B cell (primary cell): ENCODE measurements at regions of chr16 and their contacts with region 1.

Region 1: DNA sequence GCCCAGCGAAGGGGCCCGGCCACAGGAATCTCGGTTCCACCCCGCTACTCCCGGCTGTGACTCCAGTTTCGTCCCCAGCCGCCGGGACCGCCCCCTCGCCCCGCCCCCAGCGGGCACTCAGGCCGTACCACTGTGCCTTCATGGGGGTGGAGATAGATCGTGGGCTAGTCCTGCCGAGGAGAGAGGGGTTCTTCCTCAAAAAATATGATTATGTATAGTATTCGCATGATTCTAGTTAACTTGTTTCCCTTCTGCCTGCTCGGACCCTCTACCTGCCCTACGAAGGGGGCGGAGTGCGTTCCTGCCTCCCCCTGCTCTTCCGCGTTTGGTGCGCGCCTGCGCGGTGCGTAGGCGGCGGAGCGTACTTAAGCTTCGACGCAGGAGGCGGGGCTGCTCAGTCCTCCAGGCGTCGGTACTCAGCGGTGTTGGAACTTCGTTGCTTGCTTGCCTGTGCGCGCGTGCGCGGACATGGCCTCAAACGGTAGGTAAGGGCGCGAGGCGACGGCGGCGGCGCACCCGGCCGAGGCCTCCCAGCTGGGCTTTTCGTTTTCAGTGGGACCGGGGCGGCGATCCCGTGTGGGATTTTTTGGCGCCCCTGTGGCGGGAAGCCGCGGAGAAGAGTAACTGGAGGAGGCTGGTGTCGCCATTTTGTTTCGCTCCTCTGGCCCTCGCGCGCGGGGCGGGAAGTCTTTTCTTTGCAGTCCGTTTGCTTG is at the start of gene FUS:
- DNase-seq: peak; percentile 98
- ATAC-seq: peak; percentile 71
- H3K4me3 ChIP-seq: peak within 1 kb of the TSS; percentile 58 to 98 (median 91)
- H3K4me3 Mint-ChIP-seq: peak within 1 kb of the TSS; percentile 99
- H3K27ac ChIP-seq: peak within 1 kb of the TSS; percentile 90 to 93
- H3K27ac Mint-ChIP-seq: peak within 1 kb of the TSS; percentile 100
- H3K4me1 ChIP-seq: peaks cover 41 to 56% of the 10 kb centered on the region in 2 donors
- H3K4me1 Mint-ChIP-seq: peaks cover 58% of the 10 kb centered on the region
- H3K27me3 ChIP-seq: no peaks in the 10 kb centered on the region
- H3K27me3 Mint-ChIP-seq: no peaks in the 10 kb centered on the region
- CTCF ChIP-seq: no peak
- total RNA-seq, gene FUS: 585 and 597 TPM in 2 replicates

Region 2: DNA sequence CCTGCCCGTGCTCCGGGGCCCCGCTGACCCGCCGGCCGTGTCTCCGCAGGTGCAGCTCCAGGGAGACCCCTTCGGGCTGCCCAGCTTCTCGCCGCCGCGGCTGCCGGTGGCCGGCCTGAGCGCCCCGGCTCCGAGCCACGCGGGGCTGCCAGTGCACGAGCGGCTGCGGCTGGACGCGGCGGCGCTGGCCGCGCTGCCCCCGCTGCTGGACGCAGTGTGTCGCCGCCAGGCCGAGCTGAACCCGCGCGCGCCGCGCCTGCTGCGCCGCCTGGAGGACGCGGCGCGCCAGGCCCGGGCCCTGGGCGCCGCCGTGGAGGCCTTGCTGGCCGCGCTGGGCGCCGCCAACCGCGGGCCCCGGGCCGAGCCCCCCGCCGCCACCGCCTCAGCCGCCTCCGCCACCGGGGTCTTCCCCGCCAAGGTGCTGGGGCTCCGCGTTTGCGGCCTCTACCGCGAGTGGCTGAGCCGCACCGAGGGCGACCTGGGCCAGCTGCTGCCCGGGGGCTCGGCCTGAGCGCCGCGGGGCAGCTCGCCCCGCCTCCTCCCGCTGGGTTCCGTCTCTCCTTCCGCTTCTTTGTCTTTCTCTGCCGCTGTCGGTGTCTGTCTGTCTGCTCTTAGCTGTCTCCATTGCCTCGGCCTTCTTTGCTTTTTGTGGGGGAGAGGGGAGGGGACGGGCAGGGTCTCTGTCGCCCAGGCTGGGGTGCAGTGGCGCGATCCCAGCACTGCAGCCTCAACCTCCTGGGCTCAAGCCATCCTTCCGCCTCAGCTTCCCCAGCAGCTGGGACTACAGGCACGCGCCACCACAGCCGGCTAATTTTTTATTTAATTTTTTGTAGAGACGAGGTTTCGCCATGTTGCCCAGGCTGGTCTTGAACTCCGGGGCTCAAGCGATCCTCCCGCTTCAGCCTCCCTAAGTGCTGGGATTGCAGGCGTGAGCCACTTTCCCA is 277.6 kb before region 1 on chr16:
- CTCF ChIA-PET with region 1: no interaction called
- POLR2A ChIA-PET with region 1: interaction called, 12 read pairs
- intact Hi-C with region 1: no loop called
- DNase-seq: peak; percentile 78
- ATAC-seq: peak; percentile 80
- H3K4me3 ChIP-seq: peak overlapping the region; percentile 45 to 82 (median 62)
- H3K4me3 Mint-ChIP-seq: peak overlapping the region; percentile 98
- H3K27ac ChIP-seq: peak overlapping the region; percentile 57 to 79
- H3K27ac Mint-ChIP-seq: peak overlapping the region; percentile 98
- H3K4me1 ChIP-seq: peaks cover 29 to 40% of the 10 kb centered on the region in 2 donors
- H3K4me1 Mint-ChIP-seq: peaks cover 25% of the 10 kb centered on the region
- H3K27me3 ChIP-seq: no peaks in the 10 kb centered on the region
- H3K27me3 Mint-ChIP-seq: no peaks in the 10 kb centered on the region
- CTCF ChIP-seq: no peak

Region 3: DNA sequence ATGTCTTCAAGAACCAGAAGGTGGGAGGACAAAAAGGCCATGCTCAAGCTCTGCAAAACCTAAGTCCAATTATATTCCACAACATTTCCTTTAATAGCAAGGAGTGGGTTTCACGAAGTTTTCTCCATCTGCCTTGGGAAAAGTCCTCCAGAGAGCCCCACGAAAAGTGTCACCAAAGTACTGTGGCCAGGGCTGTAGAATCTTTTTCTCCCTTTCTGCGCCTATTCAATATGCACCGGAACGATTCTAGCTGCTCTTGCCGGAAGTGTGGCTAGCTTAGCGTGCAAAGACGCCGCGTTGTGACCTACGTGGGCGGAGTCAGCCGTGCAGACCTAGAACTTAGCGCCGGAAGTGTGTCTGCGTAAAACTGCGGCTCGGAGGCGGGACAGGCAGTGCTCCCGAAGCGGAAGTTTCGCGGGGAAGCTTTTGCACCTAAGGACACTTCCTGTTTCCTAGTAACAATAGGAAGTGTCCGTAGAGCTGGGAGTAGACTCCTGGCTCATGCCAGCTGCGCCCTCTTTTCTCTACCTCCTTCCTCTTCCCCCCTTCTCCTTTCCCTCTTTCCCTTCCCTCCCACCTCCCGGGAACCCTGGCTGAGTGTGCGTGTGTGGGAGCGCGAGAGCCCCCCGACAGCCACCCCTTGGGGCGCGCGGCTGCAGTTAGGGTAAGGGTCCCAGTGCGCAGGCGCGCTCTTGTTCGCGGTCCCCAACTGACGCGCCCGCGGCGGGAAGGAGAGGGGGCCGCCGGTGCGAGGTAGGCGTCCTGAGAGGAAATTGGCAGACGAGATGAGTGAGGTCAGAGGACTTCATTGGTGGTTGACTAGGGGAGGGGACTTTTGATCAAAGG is 105.7 kb before region 1 on chr16 and contains the starts of genes ZNF646 and ZNF668:
- CTCF ChIA-PET with region 1: no interaction called
- POLR2A ChIA-PET with region 1: interaction called, 19 read pairs
- intact Hi-C with region 1: no loop called
- DNase-seq: peak; percentile 99
- ATAC-seq: peak; percentile 86
- H3K4me3 ChIP-seq: peak within 1 kb of the TSS; percentile 73 to 99 (median 91)
- H3K4me3 Mint-ChIP-seq: peak within 1 kb of the TSS; percentile 95
- H3K27ac ChIP-seq: peak within 1 kb of the TSS; percentile 78 to 89
- H3K27ac Mint-ChIP-seq: peak within 1 kb of the TSS; percentile 96
- H3K4me1 ChIP-seq: peaks cover 20 to 25% of the 10 kb centered on the region in 2 donors
- H3K4me1 Mint-ChIP-seq: peaks cover 36% of the 10 kb centered on the region
- H3K27me3 ChIP-seq: no peaks in the 10 kb centered on the region
- H3K27me3 Mint-ChIP-seq: no peaks in the 10 kb centered on the region
- CTCF ChIP-seq: no peak
- total RNA-seq, gene ZNF646: 45.9 and 51.7 TPM in 2 replicates
- total RNA-seq, gene ZNF668: 11.1 and 12.0 TPM in 2 replicates

Region 4: DNA sequence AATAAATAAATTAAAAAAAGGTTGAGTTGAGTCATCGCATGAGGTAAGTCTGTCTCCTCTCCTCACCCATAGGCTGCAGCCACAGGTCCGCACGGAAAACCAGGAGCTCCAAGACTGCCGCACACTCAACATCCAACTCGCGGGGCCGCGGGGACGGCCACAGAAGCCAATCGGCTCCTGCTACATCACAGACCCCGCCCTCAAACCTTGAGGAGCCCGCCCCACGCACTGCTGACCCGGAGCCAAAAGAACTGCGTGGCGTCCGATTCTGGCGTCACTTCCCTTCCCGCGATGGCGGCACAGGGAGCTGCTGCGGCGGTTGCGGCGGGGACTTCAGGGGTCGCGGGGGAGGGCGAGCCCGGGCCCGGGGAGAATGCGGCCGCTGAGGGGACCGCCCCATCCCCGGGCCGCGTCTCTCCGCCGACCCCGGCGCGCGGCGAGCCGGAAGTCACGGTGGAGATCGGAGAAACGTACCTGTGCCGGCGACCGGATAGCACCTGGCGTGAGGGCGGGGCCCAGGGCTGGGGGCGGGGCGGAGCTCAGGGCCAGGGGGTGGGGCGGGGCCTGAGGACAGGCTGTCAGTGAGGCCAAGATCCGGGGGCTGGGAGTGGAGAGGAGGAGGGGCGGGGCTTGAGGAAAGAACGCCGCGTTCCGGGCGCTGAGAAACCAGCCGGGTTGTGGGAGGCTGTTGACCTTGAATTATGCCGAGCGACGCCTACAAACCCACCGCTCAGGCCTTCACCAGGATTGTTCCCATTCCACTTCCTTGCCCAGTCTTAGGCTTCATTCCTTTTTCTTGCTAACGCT is 62.3 kb before region 1 on chr16 and contains the start of gene KAT8:
- CTCF ChIA-PET with region 1: interaction called, 4 read pairs
- POLR2A ChIA-PET with region 1: interaction called, 16 read pairs
- intact Hi-C with region 1: no loop called
- DNase-seq: peak; percentile 98
- ATAC-seq: peak; percentile 94
- H3K4me3 ChIP-seq: peak within 1 kb of the TSS; percentile 49 to 83 (median 66)
- H3K4me3 Mint-ChIP-seq: peak within 1 kb of the TSS; percentile 92
- H3K27ac ChIP-seq: peak within 1 kb of the TSS; percentile 72 to 95
- H3K27ac Mint-ChIP-seq: peak within 1 kb of the TSS; percentile 96
- H3K4me1 ChIP-seq: peaks cover 10 to 20% of the 10 kb centered on the region in 2 donors
- H3K4me1 Mint-ChIP-seq: peaks cover 15% of the 10 kb centered on the region
- H3K27me3 ChIP-seq: no peaks in the 10 kb centered on the region
- H3K27me3 Mint-ChIP-seq: no peaks in the 10 kb centered on the region
- CTCF ChIP-seq: no peak
- total RNA-seq, gene KAT8: 100.0 and 102 TPM in 2 replicates

Region 5: GRCh38 chr16:31215287-31216162 is 35.6 kb after region 1 on chr16:
- CTCF ChIA-PET with region 1: no interaction called
- POLR2A ChIA-PET with region 1: interaction called, 21 read pairs
- intact Hi-C with region 1: no loop called
- DNase-seq: peak; percentile 62
- ATAC-seq: peak; percentile 45
- H3K4me3 ChIP-seq: peak overlapping the region; percentile 21 to 56 (median 46)
- H3K4me3 Mint-ChIP-seq: peak overlapping the region; percentile 84
- H3K27ac ChIP-seq: no peak overlapping the region
- H3K27ac Mint-ChIP-seq: no peak overlapping the region
- H3K4me1 ChIP-seq: peaks cover 41 to 42% of the 10 kb centered on the region in 2 donors
- H3K4me1 Mint-ChIP-seq: peaks cover 42% of the 10 kb centered on the region
- H3K27me3 ChIP-seq: peaks cover 0 to 58% (median 28%) of the 10 kb centered on the region in 4 experiments
- H3K27me3 Mint-ChIP-seq: peaks cover 37% of the 10 kb centered on the region
- CTCF ChIP-seq: no peak

Region 6: GRCh38 chr16:31873556-31874365 is 693.9 kb after region 1 on chr16 and contains the start of gene ZNF267:
- CTCF ChIA-PET with region 1: no interaction called
- POLR2A ChIA-PET with region 1: interaction called, 3 read pairs
- intact Hi-C with region 1: loop called (anchors 10 kb)
- DNase-seq: peak; percentile 94
- ATAC-seq: peak; percentile 74
- H3K4me3 ChIP-seq: peak within 1 kb of the TSS; percentile 79 to 99 (median 84)
- H3K4me3 Mint-ChIP-seq: peak within 1 kb of the TSS; percentile 95
- H3K27ac ChIP-seq: peak within 1 kb of the TSS; percentile 89 to 92
- H3K27ac Mint-ChIP-seq: peak within 1 kb of the TSS; percentile 97
- H3K4me1 ChIP-seq: peaks cover 58 to 66% of the 10 kb centered on the region in 2 donors
- H3K4me1 Mint-ChIP-seq: peaks cover 83% of the 10 kb centered on the region
- H3K27me3 ChIP-seq: no peaks in the 10 kb centered on the region
- H3K27me3 Mint-ChIP-seq: no peaks in the 10 kb centered on the region
- CTCF ChIP-seq: no peak
- total RNA-seq, gene ZNF267: 68.1 and 73.8 TPM in 2 replicates